ENCODE measurements at regions of chr1 and their contacts with region 1.

Region 1: GRCh38 chr1:25616095-25616986 is at the start of gene MAN1C1:
- DNase-seq: peak; percentile 70 to 93 (median 81)
- ATAC-seq: peak; percentile 76
- H3K4me3 ChIP-seq: peak within 1 kb of the TSS; percentile 64 to 74
- H3K4me3 Mint-ChIP-seq: peak within 1 kb of the TSS; percentile 83
- H3K27ac ChIP-seq: peak within 1 kb of the TSS; percentile 58 to 74
- H3K27ac Mint-ChIP-seq: peak within 1 kb of the TSS; percentile 49
- H3K4me1 ChIP-seq: peaks cover 48% of the 10 kb centered on the region
- H3K4me1 Mint-ChIP-seq: peaks cover 52% of the 10 kb centered on the region
- H3K27me3 ChIP-seq: no peaks in the 10 kb centered on the region
- H3K27me3 Mint-ChIP-seq: no peaks in the 10 kb centered on the region
- CTCF ChIP-seq: no peak
- total RNA-seq, gene MAN1C1: 24.6 to 25.7 TPM

Region 2: DNA sequence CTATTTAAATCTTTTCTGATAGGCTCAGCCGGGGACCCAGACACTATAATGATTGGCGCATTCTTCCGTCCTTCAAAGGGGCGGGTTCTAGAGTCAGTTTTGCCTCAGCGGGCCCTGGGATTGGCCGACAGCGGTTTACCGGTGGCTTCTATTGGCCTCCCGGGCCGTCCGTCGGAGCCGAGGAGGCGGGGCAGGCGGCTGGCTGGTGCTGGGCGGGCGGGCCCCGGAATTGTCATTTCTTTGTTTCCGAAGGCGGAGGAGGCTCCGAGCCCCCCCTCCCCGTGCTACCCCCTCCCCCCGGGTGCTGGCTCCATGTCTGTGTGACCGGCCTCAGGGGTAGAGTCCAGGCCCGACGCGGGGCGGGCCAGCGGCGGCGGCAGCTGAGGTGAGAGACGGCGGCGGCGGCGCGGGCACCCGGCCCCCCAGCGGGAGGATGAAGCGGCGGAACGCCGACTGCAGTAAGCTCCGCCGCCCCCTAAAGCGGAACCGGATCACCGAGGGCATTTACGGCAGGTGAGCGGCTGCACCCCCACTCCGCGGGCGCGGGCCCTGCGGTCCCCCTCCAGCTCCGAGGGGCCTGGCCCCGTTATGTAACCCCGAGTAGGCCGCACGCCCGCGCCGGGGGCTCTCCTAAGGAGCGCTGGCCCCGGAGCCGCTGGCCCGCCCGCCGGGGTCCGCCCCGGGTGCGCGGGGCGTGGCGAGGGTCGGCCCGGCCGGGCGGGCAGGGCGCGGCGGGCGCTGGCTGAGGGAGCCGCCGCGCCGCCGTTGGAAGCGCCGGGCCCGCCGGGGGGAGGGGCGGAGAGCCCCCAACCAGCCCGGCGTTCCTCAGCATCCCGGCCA is 185.5 kb before region 1 on chr1 and contains the start of gene MACO1:
- CTCF ChIA-PET with region 1: no interaction called
- POLR2A ChIA-PET with region 1: no interaction called
- intact Hi-C with region 1: loop called in 1 of 2 experiments (anchors 1 kb)
- DNase-seq: peak; percentile 92 to 99 (median 96)
- ATAC-seq: peak; percentile 80
- H3K4me3 ChIP-seq: peak within 1 kb of the TSS; percentile 64 to 94
- H3K4me3 Mint-ChIP-seq: peak within 1 kb of the TSS; percentile 94
- H3K27ac ChIP-seq: peak within 1 kb of the TSS; percentile 88 to 99
- H3K27ac Mint-ChIP-seq: peak within 1 kb of the TSS; percentile 99
- H3K4me1 ChIP-seq: peaks cover 44% of the 10 kb centered on the region
- H3K4me1 Mint-ChIP-seq: peaks cover 53% of the 10 kb centered on the region
- H3K27me3 ChIP-seq: no peaks in the 10 kb centered on the region
- H3K27me3 Mint-ChIP-seq: no peaks in the 10 kb centered on the region
- CTCF ChIP-seq: no peak
- total RNA-seq, gene MACO1: 44.7 to 47.0 TPM

Region 3: GRCh38 chr1:25572708-25573600 is 43.4 kb before region 1 on chr1:
- CTCF ChIA-PET with region 1: interaction called, 10 read pairs
- POLR2A ChIA-PET with region 1: interaction called, 5 read pairs
- intact Hi-C with region 1: no loop called
- DNase-seq: peak in 7 of 9 experiments; percentile 25 to 70 (median 60)
- ATAC-seq: peak; percentile 78
- H3K4me3 ChIP-seq: no peak overlapping the region
- H3K4me3 Mint-ChIP-seq: no peak overlapping the region
- H3K27ac ChIP-seq: no peak overlapping the region
- H3K27ac Mint-ChIP-seq: peak overlapping the region; percentile 66
- H3K4me1 ChIP-seq: peaks cover 57% of the 10 kb centered on the region
- H3K4me1 Mint-ChIP-seq: peaks cover 62% of the 10 kb centered on the region
- H3K27me3 ChIP-seq: no peaks in the 10 kb centered on the region
- H3K27me3 Mint-ChIP-seq: no peaks in the 10 kb centered on the region
- CTCF ChIP-seq: peak; percentile 75

Region 4: GRCh38 chr1:25666505-25666904 is 50.2 kb after region 1 on chr1:
- CTCF ChIA-PET with region 1: interaction called, 10 read pairs
- POLR2A ChIA-PET with region 1: interaction called, 5 read pairs
- intact Hi-C with region 1: no loop called
- DNase-seq: no peak
- ATAC-seq: no peak
- H3K4me3 ChIP-seq: no peak overlapping the region
- H3K4me3 Mint-ChIP-seq: peak overlapping the region; percentile 42
- H3K27ac ChIP-seq: no peak overlapping the region
- H3K27ac Mint-ChIP-seq: peak overlapping the region; percentile 85
- H3K4me1 ChIP-seq: peaks cover 51% of the 10 kb centered on the region
- H3K4me1 Mint-ChIP-seq: peaks cover 78% of the 10 kb centered on the region
- H3K27me3 ChIP-seq: no peaks in the 10 kb centered on the region
- H3K27me3 Mint-ChIP-seq: no peaks in the 10 kb centered on the region
- CTCF ChIP-seq: no peak

Region 5: DNA sequence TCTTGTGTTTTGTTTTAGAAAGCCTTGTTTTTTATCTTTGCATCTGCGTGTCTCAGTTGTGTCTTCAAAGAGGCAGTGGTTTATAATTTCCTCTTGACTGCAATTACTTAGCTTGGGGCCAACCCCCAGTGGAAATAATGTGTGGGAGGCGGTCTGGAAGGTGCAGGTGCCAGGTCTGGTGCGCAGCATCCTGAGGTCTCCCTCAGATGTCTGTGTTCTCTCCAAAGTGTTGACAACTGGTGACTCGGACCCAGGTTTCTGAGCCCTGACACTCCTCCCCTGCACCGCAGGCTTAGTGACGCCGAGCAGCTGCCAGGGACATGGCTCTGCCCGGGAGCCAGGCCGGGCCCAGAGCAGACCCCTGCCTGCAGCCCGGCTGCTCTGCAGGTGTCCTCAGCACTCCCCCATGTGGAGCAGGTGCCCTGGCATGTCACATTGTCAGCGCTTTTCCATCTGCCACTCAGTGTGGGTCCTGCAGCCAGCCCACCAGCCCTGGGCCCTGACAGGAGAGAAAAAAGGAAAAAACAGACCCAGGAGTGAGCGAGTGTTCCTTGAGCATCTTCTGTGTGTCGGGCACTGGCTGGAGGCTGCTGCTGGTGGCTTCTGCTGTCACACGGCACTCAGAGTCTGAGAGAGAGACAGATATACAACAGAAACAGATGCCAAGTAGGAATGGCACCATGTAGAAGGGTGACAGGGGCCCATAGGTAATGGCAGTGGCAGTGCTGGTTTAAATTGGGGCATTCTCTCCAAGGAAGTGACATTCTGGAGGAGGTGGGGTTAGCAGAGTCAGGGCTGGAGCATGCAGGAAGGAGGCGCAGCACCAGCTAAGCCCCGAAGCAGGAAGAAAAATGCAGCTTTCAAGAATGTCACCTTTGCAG is 158.8 kb after region 1 on chr1:
- CTCF ChIA-PET with region 1: interaction called, 14 read pairs
- POLR2A ChIA-PET with region 1: interaction called, 15 read pairs
- intact Hi-C with region 1: loop called (anchors 1 to 2 kb)
- DNase-seq: peak; percentile 60 to 96 (median 84)
- ATAC-seq: peak; percentile 86
- H3K4me3 ChIP-seq: peak overlapping the region in 1 of 2 experiments; percentile 59
- H3K4me3 Mint-ChIP-seq: peak overlapping the region; percentile 83
- H3K27ac ChIP-seq: peak overlapping the region; percentile 44 to 92
- H3K27ac Mint-ChIP-seq: peak overlapping the region; percentile 99
- H3K4me1 ChIP-seq: peaks cover 63% of the 10 kb centered on the region
- H3K4me1 Mint-ChIP-seq: peaks cover 76% of the 10 kb centered on the region
- H3K27me3 ChIP-seq: no peaks in the 10 kb centered on the region
- H3K27me3 Mint-ChIP-seq: no peaks in the 10 kb centered on the region
- CTCF ChIP-seq: no peak

Region 6: GRCh38 chr1:25819576-25820246 is 203.4 kb after region 1 on chr1 and contains the start of gene MTFR1L:
- CTCF ChIA-PET with region 1: interaction called, 135 read pairs
- POLR2A ChIA-PET with region 1: interaction called, 3 read pairs
- intact Hi-C with region 1: loop called in 1 of 2 experiments (anchors 1 kb)
- DNase-seq: peak; percentile 78 to 96 (median 94)
- ATAC-seq: peak; percentile 87
- H3K4me3 ChIP-seq: peak within 1 kb of the TSS; percentile 74 to 95
- H3K4me3 Mint-ChIP-seq: peak within 1 kb of the TSS; percentile 94
- H3K27ac ChIP-seq: peak within 1 kb of the TSS; percentile 65 to 77
- H3K27ac Mint-ChIP-seq: peak within 1 kb of the TSS; percentile 97
- H3K4me1 ChIP-seq: peaks cover 20% of the 10 kb centered on the region
- H3K4me1 Mint-ChIP-seq: peaks cover 35% of the 10 kb centered on the region
- H3K27me3 ChIP-seq: no peaks in the 10 kb centered on the region
- H3K27me3 Mint-ChIP-seq: no peaks in the 10 kb centered on the region
- CTCF ChIP-seq: no peak
- total RNA-seq, gene MTFR1L: 22.9 to 25.7 TPM